ENCODE measurements at regions of chr11 and their contacts with region 1.

Region 1: DNA sequence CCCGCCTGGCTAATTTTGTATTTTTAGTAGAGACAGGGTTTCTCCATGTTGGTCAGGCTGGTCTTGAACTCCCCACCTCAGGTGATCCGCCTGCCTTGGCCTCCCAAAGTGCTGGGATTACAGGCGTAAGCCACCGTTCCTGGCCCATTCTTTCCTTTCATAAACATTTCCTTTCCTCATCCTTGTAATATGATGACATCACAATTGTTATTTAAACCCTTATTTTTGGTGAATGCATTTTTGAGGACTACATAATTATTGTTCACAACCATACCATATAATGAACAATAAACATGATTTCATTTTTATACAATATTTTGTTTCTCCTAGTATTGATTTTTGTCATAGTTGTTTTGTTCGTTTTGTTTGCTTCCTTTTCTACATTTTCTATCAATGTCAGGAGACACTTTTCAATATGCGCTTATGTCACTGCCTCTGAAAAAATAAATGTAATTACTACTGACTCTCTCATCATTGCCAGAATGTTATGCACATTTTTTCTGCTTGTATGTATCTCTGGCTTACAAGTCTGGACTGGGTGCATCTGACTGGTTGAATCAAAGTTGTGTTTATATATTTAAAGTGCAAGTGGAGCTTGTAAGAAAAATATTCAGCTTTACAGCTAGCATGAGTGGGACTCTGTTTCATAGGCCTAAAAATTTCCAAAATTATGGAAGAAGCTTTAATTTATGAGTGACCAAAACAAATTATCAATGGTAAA is 2286.3 kb upstream of the RAG2 start:
- DNase-seq: no peak
- ATAC-seq: no peak
- H3K4me3 ChIP-seq: no peak overlapping the region
- H3K27ac ChIP-seq: no peak overlapping the region
- H3K4me1 ChIP-seq: no peaks in the 10 kb centered on the region
- H3K27me3 ChIP-seq: no peaks in the 10 kb centered on the region
- CTCF ChIP-seq: no peak
- POLR2A ChIP-seq: no peak

Region 2: DNA sequence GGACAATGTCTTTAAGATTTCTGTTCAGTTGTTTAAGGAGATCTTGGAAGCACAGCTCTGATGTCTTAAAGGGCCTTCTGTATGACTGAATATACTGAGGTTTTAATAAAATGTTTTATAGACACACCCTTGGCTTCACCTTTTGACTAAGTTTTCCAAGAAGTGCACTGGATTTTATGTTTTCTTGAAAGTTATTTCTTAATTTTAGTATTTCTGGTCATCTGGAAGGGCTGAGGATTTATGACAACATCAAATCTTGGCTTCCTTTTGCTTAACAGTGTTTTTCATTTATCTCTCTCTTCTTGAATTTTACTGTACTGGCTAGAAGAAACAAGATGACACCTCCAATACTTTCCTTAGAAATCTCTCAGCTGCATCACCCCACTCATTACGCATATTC is 151.7 kb after region 1 on chr11:
- intact Hi-C with region 1: loop called in 1 of 10 experiments (anchors 10 kb)
- DNase-seq: no peak
- ATAC-seq: no peak
- H3K4me3 ChIP-seq: no peak overlapping the region
- H3K27ac ChIP-seq: no peak overlapping the region
- H3K4me1 ChIP-seq: no peaks in the 10 kb centered on the region
- H3K27me3 ChIP-seq: no peaks in the 10 kb centered on the region
- CTCF ChIP-seq: no peak
- POLR2A ChIP-seq: no peak

Measured in heart left ventricle (tissue), 16 donors.